ENCODE measurements at regions of chr3 and their contacts with region 1.

Region 1: DNA sequence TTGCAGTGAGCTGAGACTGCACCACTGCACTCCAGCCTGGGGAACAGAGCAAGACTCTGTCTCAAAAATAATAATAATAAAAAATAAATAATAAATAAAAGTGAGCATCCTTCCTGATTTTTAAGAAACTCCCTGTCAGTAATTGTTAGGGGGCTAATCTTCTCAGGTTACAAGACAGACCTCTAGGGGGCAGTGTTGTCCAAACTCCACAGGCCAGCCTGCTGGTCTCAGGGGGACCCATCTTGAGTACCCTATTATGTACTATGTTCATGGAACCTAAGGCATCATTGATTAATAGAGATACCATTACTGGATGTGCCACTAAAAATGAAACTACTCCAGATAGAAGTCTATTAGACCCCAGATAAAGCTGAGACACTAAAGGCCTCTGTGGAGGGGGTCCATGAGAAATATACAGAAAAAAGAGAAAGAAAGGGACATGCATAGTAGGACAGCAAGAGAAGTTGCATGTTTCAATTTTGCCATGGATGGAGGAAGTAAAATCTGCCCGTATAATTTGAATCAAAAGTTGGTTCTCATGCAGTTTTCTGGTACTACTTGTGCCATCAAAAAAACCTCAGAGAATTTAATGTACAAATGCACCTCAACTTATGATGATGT is 85.5 kb upstream of the CDV3 start:
- DNase-seq: peak; percentile 67
- ATAC-seq: no peak
- H3K4me3 ChIP-seq: no peak overlapping the region
- H3K4me3 Mint-ChIP-seq: no peak overlapping the region
- H3K27ac ChIP-seq: no peak overlapping the region
- H3K27ac Mint-ChIP-seq: peak overlapping the region; percentile 41
- H3K4me1 ChIP-seq: peaks cover 24 to 37% of the 10 kb centered on the region in 2 donors
- H3K4me1 Mint-ChIP-seq: peaks cover 49% of the 10 kb centered on the region
- H3K27me3 ChIP-seq: no peaks in the 10 kb centered on the region
- H3K27me3 Mint-ChIP-seq: no peaks in the 10 kb centered on the region
- CTCF ChIP-seq: peak; percentile 66

Region 2: DNA sequence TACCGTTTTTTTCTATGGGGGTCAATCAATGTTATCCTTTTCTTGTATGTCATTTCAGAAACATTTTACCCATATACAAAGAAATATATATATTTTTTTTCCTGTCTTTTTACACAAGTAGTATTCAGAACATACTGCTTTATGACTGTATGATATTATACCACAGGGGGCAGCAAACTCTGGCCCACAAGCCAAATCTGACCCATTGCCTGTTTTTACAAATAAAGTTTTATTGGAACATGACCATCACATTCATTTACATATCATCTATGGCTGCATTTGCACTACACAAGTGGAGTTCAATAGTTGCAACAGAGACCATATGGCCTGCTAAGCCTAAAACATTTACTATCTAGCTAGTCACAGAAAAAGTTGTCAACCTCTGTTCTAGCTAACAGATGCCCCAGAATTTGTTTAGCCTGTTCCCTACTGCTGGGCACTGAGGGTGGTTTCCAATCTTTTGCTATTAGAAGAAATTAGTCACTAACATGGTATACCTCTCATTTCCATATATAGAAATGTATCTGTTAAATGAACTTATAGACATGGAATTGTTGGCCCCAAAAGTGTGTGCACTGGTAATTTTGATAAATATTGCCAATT is 30.5 kb before region 1 on chr3:
- CTCF ChIA-PET with region 1: interaction called, 82 read pairs
- POLR2A ChIA-PET with region 1: interaction called, 13 read pairs
- intact Hi-C with region 1: no loop called
- DNase-seq: no peak
- ATAC-seq: no peak
- H3K4me3 ChIP-seq: no peak overlapping the region
- H3K4me3 Mint-ChIP-seq: no peak overlapping the region
- H3K27ac ChIP-seq: no peak overlapping the region
- H3K27ac Mint-ChIP-seq: no peak overlapping the region
- H3K4me1 ChIP-seq: no peaks in the 10 kb centered on the region
- H3K4me1 Mint-ChIP-seq: peaks cover 4% of the 10 kb centered on the region
- H3K27me3 ChIP-seq: peaks cover 0 to 24% (median 8%) of the 10 kb centered on the region in 4 experiments
- H3K27me3 Mint-ChIP-seq: peaks cover 18% of the 10 kb centered on the region
- CTCF ChIP-seq: peak; percentile 33

Region 3: GRCh38 chr3:133464573-133464972 is 23.5 kb before region 1 on chr3:
- CTCF ChIA-PET with region 1: interaction called, 82 read pairs
- POLR2A ChIA-PET with region 1: interaction called, 4 read pairs
- intact Hi-C with region 1: loop called (anchors 2 kb)
- DNase-seq: no peak
- ATAC-seq: no peak
- H3K4me3 ChIP-seq: no peak overlapping the region
- H3K4me3 Mint-ChIP-seq: no peak overlapping the region
- H3K27ac ChIP-seq: no peak overlapping the region
- H3K27ac Mint-ChIP-seq: peak overlapping the region; percentile 41
- H3K4me1 ChIP-seq: peaks cover 53 to 62% of the 10 kb centered on the region in 2 donors
- H3K4me1 Mint-ChIP-seq: peaks cover 61% of the 10 kb centered on the region
- H3K27me3 ChIP-seq: no peaks in the 10 kb centered on the region
- H3K27me3 Mint-ChIP-seq: no peaks in the 10 kb centered on the region
- CTCF ChIP-seq: peak; percentile 37

Region 4: GRCh38 chr3:133475245-133476010 is 12.6 kb before region 1 on chr3:
- CTCF ChIA-PET with region 1: interaction called, 39 read pairs
- POLR2A ChIA-PET with region 1: interaction called, 10 read pairs
- intact Hi-C with region 1: loop called (anchors 1 kb)
- DNase-seq: peak; percentile 81
- ATAC-seq: peak; percentile 73
- H3K4me3 ChIP-seq: peak overlapping the region in 1 of 5 experiments; percentile 25
- H3K4me3 Mint-ChIP-seq: peak overlapping the region; percentile 81
- H3K27ac ChIP-seq: peak overlapping the region; percentile 75 to 82
- H3K27ac Mint-ChIP-seq: peak overlapping the region; percentile 87
- H3K4me1 ChIP-seq: peaks cover 59 to 74% of the 10 kb centered on the region in 2 donors
- H3K4me1 Mint-ChIP-seq: peaks cover 72% of the 10 kb centered on the region
- H3K27me3 ChIP-seq: no peaks in the 10 kb centered on the region
- H3K27me3 Mint-ChIP-seq: no peaks in the 10 kb centered on the region
- CTCF ChIP-seq: no peak

Region 5: DNA sequence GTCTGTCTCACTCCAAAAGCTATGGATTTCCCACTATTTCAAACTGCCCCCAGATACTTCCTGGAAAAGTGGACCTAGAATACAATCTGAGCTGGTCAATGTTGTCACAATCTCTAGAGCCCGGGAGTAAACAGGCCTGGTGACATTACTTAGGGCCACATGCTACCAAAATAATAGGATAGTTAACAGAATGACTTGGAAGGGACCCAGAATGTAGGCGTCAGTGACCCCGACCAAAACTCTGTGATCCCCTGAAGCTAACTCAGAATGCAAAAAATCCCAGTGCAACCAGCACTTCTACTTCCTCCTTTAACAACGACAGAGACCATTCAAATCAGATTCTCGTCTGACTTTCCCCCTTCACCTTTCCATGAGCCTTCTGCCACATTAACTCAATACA is 33.9 kb after region 1 on chr3:
- CTCF ChIA-PET with region 1: no interaction called
- POLR2A ChIA-PET with region 1: no interaction called
- intact Hi-C with region 1: no loop called
- DNase-seq: peak; percentile 16
- ATAC-seq: no peak
- H3K4me3 ChIP-seq: no peak overlapping the region
- H3K4me3 Mint-ChIP-seq: no peak overlapping the region
- H3K27ac ChIP-seq: no peak overlapping the region
- H3K27ac Mint-ChIP-seq: no peak overlapping the region
- H3K4me1 ChIP-seq: peaks cover 8 to 9% of the 10 kb centered on the region in 2 donors
- H3K4me1 Mint-ChIP-seq: peaks cover 12% of the 10 kb centered on the region
- H3K27me3 ChIP-seq: no peaks in the 10 kb centered on the region
- H3K27me3 Mint-ChIP-seq: no peaks in the 10 kb centered on the region
- CTCF ChIP-seq: no peak

Region 6: GRCh38 chr3:133578548-133579191 is 90.6 kb after region 1 on chr3:
- CTCF ChIA-PET with region 1: interaction called, 71 read pairs
- POLR2A ChIA-PET with region 1: interaction called, 13 read pairs
- intact Hi-C with region 1: no loop called
- DNase-seq: peak; percentile 26
- ATAC-seq: no peak
- H3K4me3 ChIP-seq: no peak overlapping the region
- H3K4me3 Mint-ChIP-seq: peak overlapping the region; percentile 55
- H3K27ac ChIP-seq: no peak overlapping the region
- H3K27ac Mint-ChIP-seq: peak overlapping the region; percentile 16
- H3K4me1 ChIP-seq: peaks cover 33 to 34% of the 10 kb centered on the region in 2 donors
- H3K4me1 Mint-ChIP-seq: peaks cover 64% of the 10 kb centered on the region
- H3K27me3 ChIP-seq: no peaks in the 10 kb centered on the region
- H3K27me3 Mint-ChIP-seq: no peaks in the 10 kb centered on the region
- CTCF ChIP-seq: peak; percentile 56